ENCODE measurements at regions of chr2 and their contacts with region 1.

Region 1: GRCh38 chr2:212505586-212505985 is 33.0 kb downstream of the ERBB4 start:
- DNase-seq: no peak
- H3K4me3 Mint-ChIP-seq: no peak overlapping the region
- H3K27ac Mint-ChIP-seq: no peak overlapping the region
- H3K4me1 Mint-ChIP-seq: peaks cover 6% of the 10 kb centered on the region
- H3K27me3 Mint-ChIP-seq: no peaks in the 10 kb centered on the region
- CTCF ChIP-seq: no peak

Region 2: DNA sequence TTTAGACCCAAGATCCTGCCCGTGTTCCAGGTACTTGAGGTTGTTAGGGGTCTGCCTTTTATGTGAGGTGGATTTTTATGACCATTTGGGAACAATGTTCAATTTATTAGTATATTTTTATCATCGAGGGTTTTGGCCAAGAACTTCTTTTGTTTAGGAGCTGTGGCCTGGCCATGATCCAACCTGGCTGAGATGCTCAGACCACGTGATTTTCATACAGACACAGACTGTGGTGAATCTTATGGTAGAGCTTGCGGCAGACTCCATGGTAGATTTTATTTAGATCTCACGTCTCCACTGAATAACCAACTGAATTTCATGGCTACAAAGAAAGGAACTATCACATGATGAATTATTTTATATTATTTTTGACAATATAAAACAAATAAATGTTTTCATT is 1499.8 kb after region 1 on chr2:
- CTCF ChIA-PET with region 1: no interaction called
- intact Hi-C with region 1: loop called (anchors 10 kb)
- DNase-seq: no peak
- H3K4me3 Mint-ChIP-seq: no peak overlapping the region
- H3K27ac Mint-ChIP-seq: no peak overlapping the region
- H3K4me1 Mint-ChIP-seq: peaks cover 6% of the 10 kb centered on the region
- H3K27me3 Mint-ChIP-seq: no peaks in the 10 kb centered on the region
- CTCF ChIP-seq: no peak

Measured in Calu3 (cell line).